Thyroid gland (tissue), 4 donors: ENCODE measurements at regions of chr14 and their contacts with region 1.

Region 1: DNA sequence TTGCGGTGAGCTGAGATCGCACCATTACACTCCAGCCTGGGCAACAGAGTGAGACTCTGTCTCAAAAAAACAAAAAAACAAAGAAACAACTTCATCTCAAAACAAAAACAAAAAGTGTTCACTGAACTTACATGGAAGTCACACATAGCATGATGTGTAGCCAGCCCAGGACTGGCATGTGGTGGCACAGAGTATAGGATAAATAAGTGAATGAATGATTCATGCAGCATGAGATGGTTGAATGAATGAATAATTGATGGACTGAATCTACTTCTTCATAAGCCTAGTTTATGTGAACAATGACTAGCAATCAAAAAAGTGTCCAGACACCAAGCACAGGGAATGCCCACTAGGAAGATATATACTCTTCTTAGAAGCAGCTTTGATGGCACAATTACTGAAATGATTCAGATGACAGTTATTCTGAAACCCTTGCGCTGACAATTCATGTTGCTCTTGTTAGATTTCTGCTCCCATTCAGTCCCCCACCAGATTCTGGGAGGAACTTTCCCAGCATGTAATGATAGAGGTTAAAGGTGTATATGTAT is 31.6 kb upstream of the SERPINA6 start:
- DNase-seq: no peak
- H3K4me3 ChIP-seq: no peak overlapping the region
- H3K27ac ChIP-seq: no peak overlapping the region
- H3K4me1 ChIP-seq: no peaks in the 10 kb centered on the region
- H3K27me3 ChIP-seq: no peaks in the 10 kb centered on the region
- CTCF ChIP-seq: no peak
- POLR2A ChIP-seq: no peak

Region 2: GRCh38 chr14:94143239-94143638 is 211.5 kb before region 1 on chr14:
- intact Hi-C with region 1: no loop called
- DNase-seq: no peak
- H3K4me3 ChIP-seq: no peak overlapping the region
- H3K27ac ChIP-seq: no peak overlapping the region
- H3K4me1 ChIP-seq: no peaks in the 10 kb centered on the region
- H3K27me3 ChIP-seq: no peaks in the 10 kb centered on the region
- CTCF ChIP-seq: peak in 1 of 6 experiments; percentile 18
- POLR2A ChIP-seq: no peak

Region 3: DNA sequence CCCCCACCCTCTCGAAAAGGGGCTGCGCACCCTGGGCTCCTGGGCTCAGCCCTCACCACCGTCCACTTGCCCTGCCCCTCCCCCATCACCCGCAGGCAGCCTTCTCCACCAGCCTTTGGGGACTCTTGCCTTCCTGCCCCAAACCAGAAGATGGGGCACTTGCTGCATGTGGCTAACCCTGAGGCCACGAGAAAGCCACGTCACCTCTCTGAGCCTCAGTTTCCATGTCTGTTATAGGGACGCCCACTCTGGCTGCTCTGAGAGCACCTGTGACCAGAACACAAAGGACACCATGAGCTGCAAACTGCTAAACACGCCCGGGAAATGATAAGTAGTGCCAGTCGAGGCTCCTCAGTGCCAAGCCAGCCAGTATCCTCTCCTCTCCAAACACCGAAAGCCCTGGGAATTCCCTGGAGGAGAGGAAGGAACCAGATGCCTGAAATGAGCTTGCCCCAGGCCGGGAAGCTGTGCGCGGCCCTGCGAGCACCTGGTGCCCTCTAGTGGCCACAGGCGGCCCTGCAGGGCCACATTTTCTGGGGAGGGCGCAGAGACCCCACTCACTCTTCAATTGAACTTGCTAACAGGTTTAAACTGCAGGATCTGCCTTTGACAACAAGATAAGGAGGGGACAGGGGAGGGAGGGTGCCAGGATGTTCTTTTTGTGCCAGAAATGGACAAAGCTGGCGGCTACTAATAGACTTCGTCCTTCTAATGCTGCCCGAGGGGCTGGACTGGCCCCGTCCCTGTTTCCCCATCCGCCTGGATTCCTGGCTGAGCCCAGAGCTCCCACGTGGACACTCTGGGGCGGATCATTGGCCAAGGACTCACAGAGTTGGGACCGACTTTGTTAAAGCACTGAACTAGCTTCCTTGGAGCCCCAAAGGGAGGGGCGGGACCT is 131.5 kb after region 1 on chr14:
- intact Hi-C with region 1: loop called (anchors 5 kb)
- DNase-seq: peak; percentile 34 to 42
- H3K4me3 ChIP-seq: no peak overlapping the region
- H3K27ac ChIP-seq: no peak overlapping the region
- H3K4me1 ChIP-seq: peaks cover 0 to 4% of the 10 kb centered on the region in 2 donors
- H3K27me3 ChIP-seq: no peaks in the 10 kb centered on the region
- CTCF ChIP-seq: peak; percentile 85 to 99 (median 94)
- POLR2A ChIP-seq: no peak

Region 4: DNA sequence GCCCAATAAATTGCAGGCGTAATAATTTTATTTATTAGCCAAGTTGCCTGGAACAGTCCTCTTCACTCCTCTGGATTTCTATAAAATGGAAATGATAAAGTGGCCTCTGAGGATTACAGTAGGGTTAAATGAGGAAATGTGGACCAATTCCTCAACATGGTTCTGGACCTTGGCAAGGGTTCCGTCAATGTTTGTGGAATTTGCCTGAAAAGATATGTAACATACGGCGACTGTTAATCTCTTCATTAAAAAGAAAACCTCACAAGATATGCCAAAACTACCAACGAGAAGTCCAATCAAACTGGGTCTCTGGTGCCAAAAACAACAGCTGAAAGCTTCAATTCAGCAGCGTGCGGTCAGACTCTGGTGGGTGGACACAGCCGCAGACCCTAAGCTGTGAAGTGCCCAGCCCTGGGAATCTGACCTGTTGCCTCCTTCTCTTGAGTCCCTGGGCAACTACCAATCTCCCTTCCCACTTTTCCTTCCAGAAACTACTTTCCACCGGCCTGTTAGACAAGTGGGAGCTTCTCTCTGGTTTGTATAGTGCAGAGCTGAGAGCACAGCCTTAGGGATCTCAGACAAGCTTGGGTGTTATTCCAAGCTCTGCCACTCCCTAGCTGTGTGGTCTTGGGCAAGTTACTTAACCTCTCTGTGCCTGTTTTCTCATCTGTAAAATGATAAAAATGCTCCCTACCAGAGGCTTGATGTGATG is 605.7 kb after region 1 on chr14:
- intact Hi-C with region 1: no loop called
- DNase-seq: no peak
- H3K4me3 ChIP-seq: no peak overlapping the region
- H3K27ac ChIP-seq: no peak overlapping the region
- H3K4me1 ChIP-seq: no peaks in the 10 kb centered on the region
- H3K27me3 ChIP-seq: no peaks in the 10 kb centered on the region
- CTCF ChIP-seq: no peak
- POLR2A ChIP-seq: no peak